Activated naive CD4-positive, alpha-beta T cell treated with anti-CD3 and anti-CD28 coated beads for 36 hours (primary cell): ENCODE measurements at regions of chr2 and their contacts with region 1.

Region 1: GRCh38 chr2:11583840-11584524 is 50.1 kb downstream of the GREB1 start:
- DNase-seq: peak; percentile 96
- H3K4me3 Mint-ChIP-seq: no peak overlapping the region
- H3K27ac Mint-ChIP-seq: peak overlapping the region; percentile 6
- H3K4me1 Mint-ChIP-seq: peaks cover 19% of the 10 kb centered on the region
- H3K27me3 Mint-ChIP-seq: peaks cover 6% of the 10 kb centered on the region

Region 2: GRCh38 chr2:10832203-10832936 is 751.6 kb before region 1 on chr2:
- CTCF ChIA-PET with region 1: interaction called, 4 read pairs
- intact Hi-C with region 1: loop called (anchors 1 kb)
- DNase-seq: peak; percentile 90
- H3K4me3 Mint-ChIP-seq: no peak overlapping the region
- H3K27ac Mint-ChIP-seq: no peak overlapping the region
- H3K4me1 Mint-ChIP-seq: peaks cover 3% of the 10 kb centered on the region
- H3K27me3 Mint-ChIP-seq: no peaks in the 10 kb centered on the region

Region 3: DNA sequence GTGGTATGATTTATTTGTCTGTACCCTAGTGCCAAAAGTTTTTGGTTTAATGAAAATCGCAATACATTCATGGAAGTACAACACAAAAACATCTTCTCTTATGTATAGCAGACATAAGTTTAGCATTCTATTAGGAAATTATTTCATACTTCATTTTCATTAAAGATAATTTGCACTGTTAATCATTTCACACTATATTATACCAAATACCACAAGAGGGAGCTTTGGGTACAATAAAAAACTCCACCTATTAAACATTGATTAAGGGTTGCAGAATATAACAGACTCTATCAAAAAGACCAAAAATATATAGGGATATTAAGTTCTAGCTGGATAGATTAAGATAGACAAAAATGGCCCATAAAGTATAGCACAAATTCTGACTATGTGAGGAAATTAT is 349.7 kb before region 1 on chr2:
- CTCF ChIA-PET with region 1: interaction called, 4 read pairs
- intact Hi-C with region 1: loop called (anchors 1 kb)
- DNase-seq: no peak
- H3K4me3 Mint-ChIP-seq: no peak overlapping the region
- H3K27ac Mint-ChIP-seq: no peak overlapping the region
- H3K4me1 Mint-ChIP-seq: peaks cover 10% of the 10 kb centered on the region
- H3K27me3 Mint-ChIP-seq: no peaks in the 10 kb centered on the region

Region 4: GRCh38 chr2:11411768-11412448 is 172.1 kb before region 1 on chr2:
- CTCF ChIA-PET with region 1: interaction called, 3 read pairs
- intact Hi-C with region 1: loop called (anchors 5 kb)
- DNase-seq: peak; percentile 30
- H3K4me3 Mint-ChIP-seq: no peak overlapping the region
- H3K27ac Mint-ChIP-seq: no peak overlapping the region
- H3K4me1 Mint-ChIP-seq: no peaks in the 10 kb centered on the region
- H3K27me3 Mint-ChIP-seq: peaks cover 10% of the 10 kb centered on the region

Region 5: DNA sequence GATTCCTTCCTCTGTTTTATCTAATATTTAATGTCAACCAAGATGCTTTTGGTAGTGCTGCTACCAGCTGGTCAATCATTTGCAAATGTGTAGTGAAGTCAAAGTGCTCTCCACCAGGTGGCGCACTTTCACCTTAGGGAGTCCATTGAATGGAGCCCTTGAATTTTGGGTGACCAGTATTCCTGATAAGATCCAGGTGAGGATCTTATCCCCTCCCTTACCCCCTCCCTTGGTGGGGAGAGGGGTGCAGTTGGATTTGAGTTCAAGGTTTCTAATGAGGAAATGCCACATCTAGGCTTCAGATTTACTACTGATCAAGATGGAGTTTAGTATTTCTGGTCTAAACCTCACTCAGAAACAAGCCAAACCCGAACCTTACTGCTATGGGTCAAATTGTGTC is 106.0 kb before region 1 on chr2:
- CTCF ChIA-PET with region 1: interaction called, 152 read pairs
- intact Hi-C with region 1: loop called (anchors 1 kb)
- DNase-seq: peak; percentile 94
- H3K4me3 Mint-ChIP-seq: no peak overlapping the region
- H3K27ac Mint-ChIP-seq: no peak overlapping the region
- H3K4me1 Mint-ChIP-seq: peaks cover 1% of the 10 kb centered on the region
- H3K27me3 Mint-ChIP-seq: peaks cover 27% of the 10 kb centered on the region

Region 6: DNA sequence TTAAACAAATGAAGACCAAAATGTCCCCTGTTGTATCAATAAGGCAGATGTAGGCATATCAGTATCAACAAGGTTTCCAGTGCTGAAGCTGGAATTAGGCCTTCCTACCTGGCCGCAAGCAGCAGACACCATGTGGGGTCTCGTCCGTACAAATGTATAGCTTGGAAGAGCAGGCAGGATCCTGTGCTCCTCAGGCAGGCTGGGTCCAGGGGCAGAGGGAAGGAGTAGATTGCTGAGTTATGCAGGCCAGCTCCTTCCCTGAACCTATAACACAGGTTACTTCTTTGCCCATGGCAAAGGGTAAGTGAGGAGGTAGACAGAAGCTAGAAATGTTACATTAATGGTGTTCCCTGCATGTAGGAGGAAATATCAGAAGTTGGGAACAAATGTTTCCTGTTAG is 62.6 kb after region 1 on chr2:
- CTCF ChIA-PET with region 1: no interaction called
- intact Hi-C with region 1: no loop called
- DNase-seq: no peak
- H3K4me3 Mint-ChIP-seq: no peak overlapping the region
- H3K27ac Mint-ChIP-seq: no peak overlapping the region
- H3K4me1 Mint-ChIP-seq: no peaks in the 10 kb centered on the region
- H3K27me3 Mint-ChIP-seq: no peaks in the 10 kb centered on the region

Region 7: DNA sequence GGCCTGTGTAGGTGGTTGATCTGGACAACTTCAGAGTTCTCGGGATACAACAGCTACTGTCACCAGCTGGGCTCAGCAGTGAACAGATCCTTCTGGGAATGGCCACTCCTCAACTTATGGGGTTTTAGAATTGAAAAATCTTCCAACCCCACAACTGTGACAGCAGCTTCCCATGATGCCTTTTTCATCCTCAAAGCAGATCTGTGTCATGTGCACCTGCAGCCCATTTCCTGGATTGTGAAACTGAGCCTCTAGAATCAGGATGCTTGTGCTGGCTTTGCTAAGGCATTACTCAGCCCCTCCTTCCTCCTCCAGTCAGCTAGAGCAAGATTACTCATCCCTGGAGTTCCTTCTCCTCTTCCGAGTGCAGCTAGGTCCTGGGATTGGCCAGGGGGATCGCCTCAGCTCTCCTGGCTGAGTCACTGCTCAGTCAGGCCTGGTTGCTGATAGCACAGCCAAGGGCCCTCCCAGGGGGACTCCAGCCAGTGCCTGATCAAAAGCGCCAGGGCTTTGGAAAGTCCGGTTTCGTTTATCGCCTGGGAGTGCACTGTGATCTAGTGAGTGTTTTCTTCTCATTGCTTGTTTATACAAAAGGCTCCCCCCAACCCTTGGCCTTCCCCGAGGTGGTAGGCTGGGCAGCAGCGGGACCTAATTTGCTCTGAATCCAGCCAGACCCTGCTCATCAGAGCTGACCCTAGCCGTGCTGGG is 160.0 kb after region 1 on chr2:
- CTCF ChIA-PET with region 1: interaction called, 3 read pairs
- intact Hi-C with region 1: loop called (anchors 1 kb)
- DNase-seq: peak; percentile 92
- H3K4me3 Mint-ChIP-seq: no peak overlapping the region
- H3K27ac Mint-ChIP-seq: peak overlapping the region; percentile 69
- H3K4me1 Mint-ChIP-seq: peaks cover 47% of the 10 kb centered on the region
- H3K27me3 Mint-ChIP-seq: no peaks in the 10 kb centered on the region